A673 (cell line): ENCODE measurements at regions of chr1 and their contacts with region 1.

Region 1: GRCh38 chr1:218135371-218135770 is 149.7 kb upstream of the RRP15 start:
- DNase-seq: no peak
- H3K4me3 ChIP-seq: no peak overlapping the region
- H3K27ac ChIP-seq: no peak overlapping the region
- H3K4me1 ChIP-seq: no peaks in the 10 kb centered on the region
- H3K27me3 ChIP-seq: peaks cover 9% of the 10 kb centered on the region
- CTCF ChIP-seq: no peak

Region 2: DNA sequence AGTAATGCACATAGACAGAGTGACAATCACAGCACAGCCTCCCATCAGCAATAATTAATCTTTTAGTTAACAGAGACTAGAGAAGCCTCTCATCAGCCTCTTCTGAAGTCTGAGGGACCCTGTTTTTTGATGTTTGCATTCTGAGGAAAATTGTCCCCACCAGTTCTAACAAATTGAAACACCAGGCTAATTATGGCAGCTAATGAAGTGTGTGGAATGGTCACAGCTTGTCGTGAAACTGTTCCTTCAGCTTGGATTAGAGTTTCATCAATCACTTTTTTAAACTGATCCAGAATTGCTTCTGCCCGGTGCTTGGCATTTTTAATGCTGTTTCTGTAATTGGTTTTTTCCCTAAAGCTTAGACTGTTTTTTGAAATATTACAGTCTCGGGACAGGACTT is 296.2 kb before region 1 on chr1:
- CTCF ChIA-PET with region 1: interaction called, 10 read pairs
- POLR2A ChIA-PET with region 1: no interaction called
- intact Hi-C with region 1: no loop called
- DNase-seq: no peak
- H3K4me3 ChIP-seq: no peak overlapping the region
- H3K27ac ChIP-seq: no peak overlapping the region
- H3K4me1 ChIP-seq: no peaks in the 10 kb centered on the region
- H3K27me3 ChIP-seq: no peaks in the 10 kb centered on the region
- CTCF ChIP-seq: no peak

Region 3: DNA sequence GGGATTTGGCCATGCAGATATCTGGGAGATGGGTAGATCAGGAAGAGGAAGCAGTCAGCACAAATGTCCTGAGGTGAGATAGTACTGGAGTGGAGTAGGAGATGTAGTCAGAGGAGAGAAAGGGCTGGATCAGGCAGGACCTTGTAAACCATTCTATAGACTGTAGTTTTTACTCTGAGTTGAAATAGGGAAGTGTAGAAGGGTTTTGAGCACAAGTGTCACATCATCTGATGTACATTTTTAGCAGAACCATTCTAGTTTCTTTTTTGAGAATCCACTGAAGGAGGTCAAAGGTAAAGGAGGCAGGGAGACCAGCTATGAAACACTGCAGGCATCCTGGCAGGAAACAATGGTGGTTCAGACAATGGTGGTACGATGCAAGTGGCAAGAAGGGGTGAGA is 44.9 kb before region 1 on chr1:
- CTCF ChIA-PET with region 1: no interaction called
- POLR2A ChIA-PET with region 1: no interaction called
- intact Hi-C with region 1: no loop called
- DNase-seq: no peak
- H3K4me3 ChIP-seq: no peak overlapping the region
- H3K27ac ChIP-seq: no peak overlapping the region
- H3K4me1 ChIP-seq: no peaks in the 10 kb centered on the region
- H3K27me3 ChIP-seq: peaks cover 18% of the 10 kb centered on the region
- CTCF ChIP-seq: no peak